ENCODE measurements at regions of chr4 and their contacts with region 1.

Region 1: DNA sequence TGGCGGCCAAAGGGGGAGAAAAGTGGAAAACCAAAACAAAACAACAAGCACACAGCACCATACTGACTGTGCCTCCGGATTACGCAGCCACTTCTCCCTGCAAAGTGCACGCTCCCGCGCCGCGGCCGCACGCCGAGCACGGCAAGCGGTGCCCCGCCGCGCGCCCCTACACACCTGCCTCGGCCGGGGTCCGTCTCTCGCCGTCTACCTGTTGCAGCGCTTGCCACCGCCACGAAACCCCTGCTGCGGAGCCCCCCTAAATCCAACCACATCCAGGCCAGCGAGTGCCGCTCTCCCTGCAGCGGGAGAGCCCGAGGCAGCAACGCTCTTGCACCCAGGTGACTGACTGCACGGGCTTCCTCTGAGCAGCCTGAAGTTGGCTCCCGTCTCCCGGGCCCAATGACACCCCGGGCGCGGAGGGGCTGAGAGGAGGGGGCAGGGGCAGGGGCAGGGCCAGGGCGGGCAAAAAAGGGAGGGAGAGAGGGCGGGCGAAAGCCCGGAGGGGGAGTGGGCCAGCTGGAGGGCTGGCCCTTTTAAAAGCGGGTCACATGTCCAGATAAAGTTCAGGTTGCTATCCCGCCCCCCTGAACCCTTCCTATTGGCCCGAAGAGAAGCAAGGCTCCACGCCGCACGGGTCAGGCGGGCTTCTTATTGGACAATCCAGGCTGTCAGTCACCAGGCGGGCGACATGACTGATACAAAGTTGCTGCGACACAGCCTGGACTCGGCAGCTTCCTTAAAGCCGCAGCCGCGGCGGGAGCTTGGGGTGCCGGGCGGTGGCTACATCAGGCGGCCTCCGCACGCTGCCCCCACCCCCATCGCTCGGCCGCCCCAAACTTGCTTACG is at the start of gene NR3C2:
- DNase-seq: peak; percentile 92 to 96
- H3K4me3 ChIP-seq: peak within 1 kb of the TSS; percentile 74
- H3K27ac ChIP-seq: no peak within 1 kb of the TSS
- H3K4me1 ChIP-seq: peaks cover 13% of the 10 kb centered on the region; the same call in 1 of the 2 replicates
- H3K27me3 ChIP-seq: peaks cover 20% of the 10 kb centered on the region
- CTCF ChIP-seq: no peak
- total RNA-seq, gene NR3C2: 0.93 and 0.96 TPM in 2 replicates

Region 2: DNA sequence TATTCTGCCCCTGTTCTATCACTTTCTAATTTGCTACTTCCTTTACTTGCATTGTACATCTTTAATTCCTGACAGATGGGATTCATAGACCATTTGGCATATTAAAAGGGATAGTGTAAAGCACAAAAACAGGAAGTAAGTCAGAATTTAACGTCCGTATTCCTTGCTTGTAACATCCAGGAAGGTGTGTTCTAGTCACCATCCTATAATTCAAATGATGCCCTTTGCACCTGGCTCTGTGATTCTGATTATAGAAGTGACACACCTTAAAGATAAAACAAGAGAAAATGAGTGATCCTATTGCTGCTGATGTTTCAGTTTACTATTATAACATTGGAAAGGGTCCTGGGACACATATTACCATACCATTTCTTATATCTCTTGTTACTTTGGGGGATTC is 238.7 kb after region 1 on chr4:
- CTCF ChIA-PET with region 1: no interaction called
- POLR2A ChIA-PET with region 1: no interaction called
- intact Hi-C with region 1: no loop called
- DNase-seq: no peak
- H3K4me3 ChIP-seq: no peak overlapping the region
- H3K27ac ChIP-seq: no peak overlapping the region
- H3K4me1 ChIP-seq: no peaks in the 10 kb centered on the region
- H3K27me3 ChIP-seq: no peaks in the 10 kb centered on the region
- CTCF ChIP-seq: no peak

Region 3: GRCh38 chr4:148787831-148788477 is 345.7 kb after region 1 on chr4:
- CTCF ChIA-PET with region 1: no interaction called
- POLR2A ChIA-PET with region 1: no interaction called
- intact Hi-C with region 1: loop called (anchors 2 kb)
- DNase-seq: peak; percentile 34 to 44
- H3K4me3 ChIP-seq: no peak overlapping the region
- H3K27ac ChIP-seq: peak overlapping the region; percentile 25
- H3K4me1 ChIP-seq: peaks cover 27% of the 10 kb centered on the region
- H3K27me3 ChIP-seq: no peaks in the 10 kb centered on the region
- CTCF ChIP-seq: no peak

Region 4: GRCh38 chr4:149031399-149031798 is 589.2 kb after region 1 on chr4:
- CTCF ChIA-PET with region 1: interaction called, 3 read pairs
- POLR2A ChIA-PET with region 1: no interaction called
- intact Hi-C with region 1: loop called (anchors 10 kb)
- DNase-seq: peak in 1 of 2 experiments; percentile 40
- H3K4me3 ChIP-seq: no peak overlapping the region
- H3K27ac ChIP-seq: no peak overlapping the region
- H3K4me1 ChIP-seq: no peaks in the 10 kb centered on the region
- H3K27me3 ChIP-seq: no peaks in the 10 kb centered on the region
- CTCF ChIP-seq: peak; percentile 62

Measured in PC-9 (cell line).